Activated T-helper 1 cell treated with anti-CD3 and anti-CD28 coated beads, Interleukin-12 subunit alpha, Interleukin-12 subunit beta, Interleukin-2, Interleukin-4 antibody, amounts not matched to agents 30 ng/mL and 10 ng/mL and 1 ng/mL, durations not matched to agents 14 hours and 24 hours and 36 hours (primary cell): ENCODE measurements at regions of chr12 and their contacts with region 1.

Region 1: GRCh38 chr12:50400598-50401364 is at the start of gene LARP4:
- DNase-seq: peak; percentile 91
- H3K4me3 Mint-ChIP-seq: peak within 1 kb of the TSS; percentile 97
- H3K27ac Mint-ChIP-seq: peak within 1 kb of the TSS; percentile 90
- H3K4me1 Mint-ChIP-seq: peaks cover 22% of the 10 kb centered on the region
- H3K27me3 Mint-ChIP-seq: peaks cover 3% of the 10 kb centered on the region
- total RNA-seq, gene LARP4: 119 and 128 TPM in 2 replicates

Region 2: GRCh38 chr12:48681738-48682532 is 1718.8 kb before region 1 on chr12 and contains the start of gene KANSL2:
- intact Hi-C with region 1: loop called (anchors 5 kb)
- DNase-seq: peak; percentile 97
- H3K4me3 Mint-ChIP-seq: peak within 1 kb of the TSS; percentile 99
- H3K27ac Mint-ChIP-seq: peak within 1 kb of the TSS; percentile 96
- H3K4me1 Mint-ChIP-seq: peaks cover 44% of the 10 kb centered on the region
- H3K27me3 Mint-ChIP-seq: no peaks in the 10 kb centered on the region
- total RNA-seq, gene KANSL2: 65.3 and 66.4 TPM in 2 replicates

Region 3: GRCh38 chr12:50025187-50026059 is 375.4 kb before region 1 on chr12 and contains the start of gene RACGAP1:
- intact Hi-C with region 1: loop called (anchors 1 kb)
- DNase-seq: peak; percentile 98
- H3K4me3 Mint-ChIP-seq: peak within 1 kb of the TSS; percentile 98
- H3K27ac Mint-ChIP-seq: peak within 1 kb of the TSS; percentile 99
- H3K4me1 Mint-ChIP-seq: peaks cover 46% of the 10 kb centered on the region
- H3K27me3 Mint-ChIP-seq: peaks cover 3% of the 10 kb centered on the region
- total RNA-seq, gene RACGAP1: 68.1 and 71.2 TPM in 2 replicates

Region 4: GRCh38 chr12:50111693-50112455 is 288.9 kb before region 1 on chr12 and contains the start of gene COX14:
- intact Hi-C with region 1: loop called (anchors 1 kb)
- DNase-seq: peak; percentile 98
- H3K4me3 Mint-ChIP-seq: peak within 1 kb of the TSS; percentile 94
- H3K27ac Mint-ChIP-seq: peak within 1 kb of the TSS; percentile 94
- H3K4me1 Mint-ChIP-seq: peaks cover 42% of the 10 kb centered on the region
- H3K27me3 Mint-ChIP-seq: no peaks in the 10 kb centered on the region
- total RNA-seq, gene COX14: 44.3 and 45.6 TPM in 2 replicates

Region 5: DNA sequence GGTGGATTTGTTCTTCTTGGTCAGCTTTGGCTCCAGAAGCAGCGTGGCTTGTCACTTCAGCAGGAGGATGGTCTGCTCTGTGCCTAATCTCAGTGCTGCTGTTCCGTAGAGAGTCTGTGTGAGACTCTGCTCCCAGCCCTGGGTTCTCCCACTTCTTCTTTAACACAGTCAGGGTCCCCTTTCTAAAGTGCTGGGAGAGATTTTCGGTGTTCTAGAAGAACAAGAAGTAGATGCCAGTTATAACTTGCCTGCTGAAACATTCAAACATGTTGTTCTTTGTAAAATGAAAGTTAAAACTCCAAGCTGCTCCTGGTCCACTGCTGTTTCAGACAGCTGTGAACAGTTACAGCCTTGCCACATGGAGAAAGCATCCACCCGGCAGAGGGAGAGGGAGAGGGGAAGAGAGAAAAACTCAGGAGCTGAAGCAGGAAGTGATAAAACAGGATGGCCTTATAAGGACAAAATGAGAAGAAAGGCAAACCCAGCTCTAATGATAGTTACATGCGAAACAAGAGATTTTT is 178.4 kb before region 1 on chr12:
- intact Hi-C with region 1: loop called (anchors 1 kb)
- DNase-seq: peak; percentile 11
- H3K4me3 Mint-ChIP-seq: no peak overlapping the region
- H3K27ac Mint-ChIP-seq: no peak overlapping the region
- H3K4me1 Mint-ChIP-seq: peaks cover 11% of the 10 kb centered on the region
- H3K27me3 Mint-ChIP-seq: no peaks in the 10 kb centered on the region

Region 6: GRCh38 chr12:50257686-50258551 is 142.9 kb before region 1 on chr12:
- intact Hi-C with region 1: no loop called
- DNase-seq: no peak
- H3K4me3 Mint-ChIP-seq: no peak overlapping the region
- H3K27ac Mint-ChIP-seq: no peak overlapping the region
- H3K4me1 Mint-ChIP-seq: peaks cover 8% of the 10 kb centered on the region
- H3K27me3 Mint-ChIP-seq: peaks cover 1% of the 10 kb centered on the region

Region 7: GRCh38 chr12:50297027-50297426 is 103.8 kb before region 1 on chr12:
- intact Hi-C with region 1: no loop called
- DNase-seq: no peak
- H3K4me3 Mint-ChIP-seq: no peak overlapping the region
- H3K27ac Mint-ChIP-seq: no peak overlapping the region
- H3K4me1 Mint-ChIP-seq: no peaks in the 10 kb centered on the region
- H3K27me3 Mint-ChIP-seq: peaks cover 2% of the 10 kb centered on the region

Region 8: GRCh38 chr12:50467439-50467838 is 66.7 kb after region 1 on chr12:
- intact Hi-C with region 1: no loop called
- DNase-seq: no peak
- H3K4me3 Mint-ChIP-seq: no peak overlapping the region
- H3K27ac Mint-ChIP-seq: peak overlapping the region; percentile 28
- H3K4me1 Mint-ChIP-seq: no peaks in the 10 kb centered on the region
- H3K27me3 Mint-ChIP-seq: no peaks in the 10 kb centered on the region

Region 9: DNA sequence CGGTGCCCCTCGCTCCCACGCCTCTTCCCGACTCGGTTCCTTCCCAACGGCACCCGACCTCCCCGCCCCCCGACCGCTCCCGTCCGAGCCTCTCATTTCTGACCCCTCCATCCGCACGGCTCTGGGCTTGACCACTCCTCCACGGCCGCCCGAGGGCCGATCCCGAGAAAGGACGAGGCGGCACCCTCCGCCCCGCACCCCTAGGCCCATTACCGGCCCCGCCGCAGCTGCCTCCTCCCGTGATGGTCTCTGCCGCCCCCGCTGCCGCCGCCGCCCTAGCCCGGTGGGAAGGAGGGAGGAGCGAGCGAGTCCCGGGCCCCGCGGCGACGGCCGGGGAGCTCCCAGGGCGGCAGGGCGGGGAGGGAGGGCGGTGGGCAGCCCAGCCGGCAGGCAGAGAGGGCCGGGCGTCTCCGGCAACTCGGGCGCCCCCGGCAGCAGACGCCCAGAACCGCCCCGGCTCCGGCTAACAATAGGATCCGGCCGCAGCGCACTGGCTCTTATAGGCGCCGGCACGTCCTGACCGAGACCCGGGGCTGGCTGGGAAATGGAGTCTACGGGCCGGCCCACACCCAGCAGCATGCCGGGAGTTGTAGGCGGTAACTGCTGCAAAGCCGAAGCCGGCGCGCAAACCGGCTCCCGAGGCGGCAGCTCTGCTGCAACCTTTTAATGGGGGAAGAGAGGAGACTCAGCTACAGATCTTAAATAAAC is 682.5 kb after region 1 on chr12 and contains the start of gene CSRNP2:
- intact Hi-C with region 1: loop called (anchors 2 kb)
- DNase-seq: peak; percentile 94
- H3K4me3 Mint-ChIP-seq: peak within 1 kb of the TSS; percentile 99
- H3K27ac Mint-ChIP-seq: peak within 1 kb of the TSS; percentile 91
- H3K4me1 Mint-ChIP-seq: peaks cover 34% of the 10 kb centered on the region
- H3K27me3 Mint-ChIP-seq: peaks cover 3% of the 10 kb centered on the region
- total RNA-seq, gene CSRNP2: 28.6 and 35.2 TPM in 2 replicates